PC-9 (cell line): ENCODE measurements at regions of chr9 and their contacts with region 1.

Region 1: GRCh38 chr9:7212101-7212500 is 454.3 kb downstream of the KDM4C start:
- DNase-seq: no peak
- H3K4me3 ChIP-seq: no peak overlapping the region
- H3K27ac ChIP-seq: no peak overlapping the region
- H3K4me1 ChIP-seq: no peaks in the 10 kb centered on the region
- H3K27me3 ChIP-seq: no peaks in the 10 kb centered on the region
- CTCF ChIP-seq: no peak

Region 2: GRCh38 chr9:7266911-7267595 is 55.0 kb after region 1 on chr9:
- CTCF ChIA-PET with region 1: no interaction called
- POLR2A ChIA-PET with region 1: interaction called, 11 read pairs
- intact Hi-C with region 1: no loop called
- DNase-seq: no peak
- H3K4me3 ChIP-seq: no peak overlapping the region
- H3K27ac ChIP-seq: no peak overlapping the region
- H3K4me1 ChIP-seq: no peaks in the 10 kb centered on the region
- H3K27me3 ChIP-seq: peaks cover 15% of the 10 kb centered on the region
- CTCF ChIP-seq: no peak

Region 3: GRCh38 chr9:8156346-8156745 is 944.2 kb after region 1 on chr9:
- CTCF ChIA-PET with region 1: no interaction called
- POLR2A ChIA-PET with region 1: no interaction called
- intact Hi-C with region 1: no loop called
- DNase-seq: no peak
- H3K4me3 ChIP-seq: no peak overlapping the region
- H3K27ac ChIP-seq: no peak overlapping the region
- H3K4me1 ChIP-seq: no peaks in the 10 kb centered on the region
- H3K27me3 ChIP-seq: no peaks in the 10 kb centered on the region
- CTCF ChIP-seq: no peak